Motor neuron (in vitro differentiated cells): ENCODE measurements at regions of chr3 and their contacts with region 1.

Region 1: DNA sequence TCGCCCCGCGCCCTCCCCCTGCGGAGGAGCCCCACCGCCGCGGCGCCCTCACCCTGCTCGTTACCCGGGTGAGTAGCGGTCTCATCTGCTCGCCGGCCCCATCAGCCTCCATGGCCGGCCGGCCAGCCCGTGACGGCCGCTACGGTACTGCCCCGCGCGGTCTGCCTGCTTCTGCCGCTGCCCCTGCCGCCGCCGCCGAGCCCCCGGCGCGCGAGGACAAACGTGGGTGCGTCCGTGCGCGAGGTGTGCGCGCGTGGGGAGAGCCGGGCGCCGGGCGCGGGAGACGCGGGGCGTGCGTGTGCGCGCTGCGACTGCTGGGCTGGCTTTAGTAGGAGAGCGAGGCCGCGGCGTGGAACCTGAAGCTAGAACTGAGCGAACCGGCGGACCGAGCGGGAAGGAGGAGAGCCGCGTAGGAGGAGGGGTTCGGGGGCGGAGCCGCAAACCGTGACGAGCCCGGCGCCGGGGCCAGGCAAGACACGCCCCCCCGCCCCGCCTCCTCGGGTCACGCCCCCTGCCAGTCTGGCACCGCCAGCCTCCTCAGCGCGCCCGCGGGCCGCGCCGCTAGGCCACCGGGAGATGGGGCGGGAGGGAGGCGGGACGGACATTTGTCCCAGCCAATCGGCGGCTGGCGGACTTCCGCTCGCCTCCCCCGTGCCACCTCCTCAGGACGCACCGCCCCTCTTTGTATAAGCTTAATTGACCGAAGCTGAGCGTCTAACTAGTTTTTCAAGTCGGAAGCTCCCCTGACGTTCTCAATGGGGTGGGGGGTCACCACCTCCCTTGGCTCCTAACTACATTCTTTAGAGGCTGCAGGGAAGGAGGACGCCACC is at the start of gene SLC4A7:
- ATAC-seq: peak; percentile 80 to 90 (median 88)
- H3K4me3 ChIP-seq: peak within 1 kb of the TSS; percentile 65 to 96 (median 83)
- H3K27ac ChIP-seq: peak within 1 kb of the TSS; percentile 90 to 92
- H3K4me1 ChIP-seq: peaks cover 10 to 15% of the 10 kb centered on the region in 2 donors
- total RNA-seq, gene SLC4A7: 40.3 to 187 (median 67.5) TPM

Region 2: GRCh38 chr3:27105904-27106303 is 378.3 kb before region 1 on chr3:
- in situ Hi-C with region 1: no loop called
- ATAC-seq: no peak
- H3K4me3 ChIP-seq: no peak overlapping the region
- H3K27ac ChIP-seq: no peak overlapping the region
- H3K4me1 ChIP-seq: no peaks in the 10 kb centered on the region

Region 3: DNA sequence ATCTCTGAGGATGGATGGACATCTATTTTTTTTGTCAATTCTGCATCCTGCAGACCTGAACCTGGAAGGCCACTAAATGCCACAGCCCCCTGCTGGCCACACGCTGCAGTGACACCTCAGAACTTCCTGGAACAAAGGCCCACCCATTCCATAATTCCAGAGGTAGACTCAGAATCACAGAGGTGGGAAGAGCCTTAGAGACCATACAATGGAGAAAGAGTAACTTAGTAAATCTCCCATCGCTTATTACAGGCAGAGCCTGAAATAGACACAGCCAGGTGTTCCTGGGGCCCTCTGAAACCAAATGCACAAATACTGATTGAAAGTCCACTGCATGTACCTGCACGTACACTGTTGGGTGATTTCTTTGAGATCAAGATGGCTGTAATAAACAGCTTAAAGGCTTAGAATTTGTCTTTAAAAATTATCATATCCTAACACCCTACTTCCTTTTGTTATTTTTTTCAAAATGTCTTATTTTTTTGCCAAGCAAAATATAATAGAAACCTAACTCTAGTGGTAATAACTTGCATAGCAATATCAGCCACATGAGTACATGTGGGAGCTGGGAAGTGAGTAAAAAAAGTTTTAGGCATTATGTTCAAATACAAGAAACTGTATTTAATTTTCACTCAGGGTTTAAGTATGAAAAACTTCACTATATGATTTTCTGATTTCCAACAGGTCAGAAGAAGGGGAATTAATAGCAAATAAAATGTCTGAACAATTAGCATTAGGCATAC is 175.2 kb after region 1 on chr3:
- in situ Hi-C with region 1: loop called in 2 of 9 experiments (anchors 25 kb)
- ATAC-seq: peak in 4 of 8 experiments; percentile 57 to 94 (median 80)
- H3K4me3 ChIP-seq: no peak overlapping the region
- H3K27ac ChIP-seq: no peak overlapping the region
- H3K4me1 ChIP-seq: no peaks in the 10 kb centered on the region